ENCODE measurements at regions of chr9 and their contacts with region 1.

Region 1: GRCh38 chr9:10059044-10059443 is 553.8 kb downstream of the PTPRD start:
- DNase-seq: no peak

Region 2: DNA sequence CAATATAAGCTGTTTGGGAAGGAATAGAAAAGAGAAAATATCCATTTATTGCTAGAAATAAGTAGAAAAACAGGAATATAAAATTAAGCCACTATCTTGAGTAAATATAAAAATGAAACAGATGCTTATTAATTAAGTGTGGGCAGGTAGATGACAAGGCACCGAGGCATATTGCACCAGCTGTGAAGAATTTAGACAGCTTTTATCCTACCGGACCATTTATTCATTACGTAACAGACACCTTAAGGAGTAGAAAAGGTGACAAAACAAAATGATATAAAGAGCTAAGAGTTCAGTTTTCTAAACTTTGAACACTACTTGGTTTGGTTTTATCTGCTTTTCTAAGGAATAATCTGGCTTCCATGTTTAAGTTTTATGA is 149.6 kb after region 1 on chr9:
- intact Hi-C with region 1: loop called (anchors 10 kb)
- DNase-seq: no peak

Region 3: GRCh38 chr9:10268531-10269485 is 209.8 kb after region 1 on chr9:
- intact Hi-C with region 1: loop called (anchors 5 kb)
- DNase-seq: no peak

Region 4: DNA sequence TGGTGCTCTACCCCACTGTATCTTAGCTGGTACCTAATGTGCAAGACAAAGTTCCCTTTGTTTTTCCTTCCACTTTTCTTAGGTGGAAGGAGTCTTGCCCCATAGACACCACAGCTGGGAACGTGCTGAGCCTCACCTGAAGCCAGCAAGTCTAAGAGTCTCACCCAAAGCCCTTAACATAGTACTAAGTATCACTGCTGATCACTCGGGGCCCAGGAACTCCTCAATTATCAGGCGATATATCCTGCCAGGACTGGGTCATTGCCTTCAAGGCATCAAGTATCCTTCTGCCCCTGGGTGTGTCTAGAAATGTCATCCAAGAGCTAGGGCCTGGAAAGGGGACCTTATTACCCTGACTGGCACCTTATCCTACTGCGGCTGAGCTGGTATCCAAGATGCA is 429.9 kb after region 1 on chr9:
- intact Hi-C with region 1: no loop called
- DNase-seq: no peak